MCF 10A (cell line): ENCODE measurements at regions of chr17 and their contacts with region 1.

Region 1: GRCh38 chr17:28346746-28347246 is 10.5 kb downstream of the POLDIP2 start:
- DNase-seq: no peak
- H3K4me3 Mint-ChIP-seq: no peak overlapping the region
- H3K27ac Mint-ChIP-seq: peak overlapping the region; percentile 59
- H3K4me1 Mint-ChIP-seq: peaks cover 12% of the 10 kb centered on the region
- H3K27me3 Mint-ChIP-seq: no peaks in the 10 kb centered on the region
- CTCF ChIP-seq: no peak

Region 2: GRCh38 chr17:28154242-28154641 is 192.6 kb before region 1 on chr17:
- CTCF ChIA-PET with region 1: no interaction called
- POLR2A ChIA-PET with region 1: no interaction called
- intact Hi-C with region 1: no loop called
- DNase-seq: no peak
- H3K4me3 Mint-ChIP-seq: no peak overlapping the region
- H3K27ac Mint-ChIP-seq: no peak overlapping the region
- H3K4me1 Mint-ChIP-seq: no peaks in the 10 kb centered on the region
- H3K27me3 Mint-ChIP-seq: no peaks in the 10 kb centered on the region
- CTCF ChIP-seq: no peak

Region 3: DNA sequence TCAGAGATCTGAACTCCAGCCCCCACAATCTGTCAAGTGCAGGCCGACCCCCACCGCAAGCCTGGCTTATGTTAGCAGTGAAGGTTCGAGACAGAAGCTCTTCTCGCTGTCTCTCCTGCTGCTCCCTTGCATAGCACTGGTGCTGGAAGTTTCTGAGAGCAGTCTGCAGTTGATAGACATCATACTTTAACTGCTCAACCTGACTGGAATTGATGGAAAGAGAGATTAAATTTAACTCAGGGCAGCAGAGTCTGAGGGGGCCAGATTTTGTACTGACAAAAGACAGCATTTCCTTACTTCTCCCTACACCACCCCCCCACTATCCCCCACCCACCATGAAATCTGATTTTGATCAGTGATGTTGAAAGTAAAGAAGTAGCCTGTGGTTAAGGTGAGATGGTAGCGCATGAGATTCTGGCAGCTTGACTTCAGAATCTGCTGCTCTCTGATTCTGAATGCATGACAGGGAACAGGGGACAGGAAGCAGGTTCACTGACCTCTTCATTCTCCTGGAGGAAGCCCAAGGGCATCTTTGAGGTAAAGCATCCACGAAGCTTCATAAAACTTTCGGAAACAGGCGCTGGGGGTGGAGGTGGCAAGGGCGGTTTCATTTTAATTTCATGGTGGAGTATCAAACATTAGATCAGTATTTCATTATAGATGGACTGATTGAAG is 72.1 kb before region 1 on chr17:
- CTCF ChIA-PET with region 1: no interaction called
- POLR2A ChIA-PET with region 1: no interaction called
- intact Hi-C with region 1: no loop called
- DNase-seq: no peak
- H3K4me3 Mint-ChIP-seq: no peak overlapping the region
- H3K27ac Mint-ChIP-seq: no peak overlapping the region
- H3K4me1 Mint-ChIP-seq: peaks cover 16% of the 10 kb centered on the region
- H3K27me3 Mint-ChIP-seq: peaks cover 67% of the 10 kb centered on the region
- CTCF ChIP-seq: no peak

Region 4: DNA sequence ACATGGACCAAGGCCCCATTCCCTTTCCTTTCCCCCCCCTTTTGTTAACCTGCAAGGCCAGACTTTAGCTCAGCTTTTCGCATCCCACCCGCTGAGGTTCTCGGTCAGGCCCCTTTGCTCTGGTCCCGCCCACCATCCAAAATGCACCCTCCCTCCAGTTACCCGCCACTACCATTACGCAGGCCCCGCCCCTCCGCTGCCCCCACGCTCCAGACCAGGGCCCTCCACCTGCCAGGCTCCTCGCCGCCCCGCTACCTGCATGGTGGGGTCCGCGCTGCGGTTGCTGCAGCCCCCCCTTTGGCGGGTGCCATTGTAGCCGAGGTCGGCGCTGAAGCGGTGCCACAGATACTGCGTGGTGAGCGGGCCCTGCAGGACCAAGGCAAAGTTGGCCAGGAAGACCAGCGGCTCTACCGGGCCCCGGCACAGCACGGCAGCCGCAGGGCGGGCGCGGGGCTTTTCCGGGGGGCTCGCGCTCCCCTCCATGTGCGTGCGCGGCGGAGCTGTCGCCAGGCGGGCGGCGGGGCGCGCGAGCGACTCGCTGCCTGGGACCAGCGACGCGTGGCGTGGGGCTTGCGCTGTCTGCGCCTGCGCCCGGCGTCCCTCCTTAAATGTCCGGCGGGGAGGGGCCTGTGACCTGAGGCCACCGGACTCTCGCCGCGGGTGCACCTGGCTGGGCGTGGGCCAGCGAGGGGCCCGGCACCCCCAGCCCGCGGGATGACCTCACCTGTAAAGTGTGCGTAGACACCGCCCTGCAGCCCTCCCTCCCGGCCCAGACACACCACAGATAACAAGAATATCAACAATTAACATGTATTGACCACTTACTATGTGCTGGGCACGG is 59.1 kb after region 1 on chr17 and contains the start of gene SLC46A1:
- CTCF ChIA-PET with region 1: interaction called, 6 read pairs
- POLR2A ChIA-PET with region 1: interaction called, 24 read pairs
- intact Hi-C with region 1: no loop called
- DNase-seq: peak; percentile 44
- H3K4me3 Mint-ChIP-seq: peak within 1 kb of the TSS; percentile 86
- H3K27ac Mint-ChIP-seq: no peak within 1 kb of the TSS
- H3K4me1 Mint-ChIP-seq: peaks cover 23% of the 10 kb centered on the region
- H3K27me3 Mint-ChIP-seq: no peaks in the 10 kb centered on the region
- CTCF ChIP-seq: no peak
- total RNA-seq, gene SLC46A1: 18.4 and 20.1 TPM in 2 replicates